Activated B cell treated with CpG ODN at 0.5 μM for 24 hours (primary cell): ENCODE measurements at regions of chr10 and their contacts with region 1.

Region 1: DNA sequence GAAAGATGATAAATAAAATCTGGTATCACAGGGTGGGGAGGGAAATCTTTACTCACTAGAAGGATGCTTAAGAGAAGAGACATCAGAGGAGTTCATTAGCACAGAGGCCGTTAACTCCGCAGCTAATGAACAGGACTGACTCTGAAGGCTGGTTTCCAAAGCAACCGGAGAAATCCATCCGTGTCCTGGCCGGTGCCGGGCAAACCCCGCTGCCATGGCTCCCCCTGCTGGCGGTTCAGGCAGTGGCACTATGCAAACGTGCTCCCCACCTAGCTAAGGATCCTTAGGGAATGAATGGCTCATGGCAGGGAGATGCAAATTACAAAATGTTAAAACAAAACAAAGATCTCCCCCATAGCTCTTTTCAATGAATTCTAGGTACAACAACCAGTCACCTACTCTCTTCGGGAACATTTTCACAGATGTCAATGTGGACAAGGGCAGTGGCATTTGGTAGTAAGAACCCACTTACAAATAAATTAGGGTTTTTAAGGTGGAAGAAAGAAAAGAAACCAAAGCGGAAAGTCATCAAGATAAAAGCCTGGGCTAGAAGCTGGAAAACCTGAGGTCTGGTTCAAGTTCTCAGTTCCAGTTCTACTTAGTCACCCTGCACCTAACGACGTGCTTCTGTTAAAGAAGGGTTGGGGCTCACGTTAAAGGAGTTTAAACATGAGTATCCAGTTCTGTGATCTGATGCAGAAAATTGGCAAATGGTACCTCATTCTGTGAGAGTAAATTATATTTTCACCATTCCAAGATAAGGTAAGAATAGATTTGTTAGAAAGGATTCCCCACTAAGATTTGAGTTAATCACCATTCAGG is 138.2 kb downstream of the SVIL start:
- DNase-seq: no peak
- ATAC-seq: peak; percentile 42
- H3K4me3 Mint-ChIP-seq: no peak overlapping the region
- H3K27ac Mint-ChIP-seq: no peak overlapping the region
- H3K4me1 Mint-ChIP-seq: no peaks in the 10 kb centered on the region
- H3K27me3 Mint-ChIP-seq: peaks cover 3% of the 10 kb centered on the region
- CTCF ChIP-seq: peak; percentile 54

Region 2: GRCh38 chr10:29512425-29512974 is 15.9 kb after region 1 on chr10:
- CTCF ChIA-PET with region 1: interaction called, 12 read pairs
- POLR2A ChIA-PET with region 1: no interaction called
- intact Hi-C with region 1: no loop called
- DNase-seq: no peak
- ATAC-seq: no peak
- H3K4me3 Mint-ChIP-seq: no peak overlapping the region
- H3K27ac Mint-ChIP-seq: no peak overlapping the region
- H3K4me1 Mint-ChIP-seq: no peaks in the 10 kb centered on the region
- H3K27me3 Mint-ChIP-seq: no peaks in the 10 kb centered on the region
- CTCF ChIP-seq: no peak